ENCODE measurements at regions of chr7 and their contacts with region 1.

Region 1: DNA sequence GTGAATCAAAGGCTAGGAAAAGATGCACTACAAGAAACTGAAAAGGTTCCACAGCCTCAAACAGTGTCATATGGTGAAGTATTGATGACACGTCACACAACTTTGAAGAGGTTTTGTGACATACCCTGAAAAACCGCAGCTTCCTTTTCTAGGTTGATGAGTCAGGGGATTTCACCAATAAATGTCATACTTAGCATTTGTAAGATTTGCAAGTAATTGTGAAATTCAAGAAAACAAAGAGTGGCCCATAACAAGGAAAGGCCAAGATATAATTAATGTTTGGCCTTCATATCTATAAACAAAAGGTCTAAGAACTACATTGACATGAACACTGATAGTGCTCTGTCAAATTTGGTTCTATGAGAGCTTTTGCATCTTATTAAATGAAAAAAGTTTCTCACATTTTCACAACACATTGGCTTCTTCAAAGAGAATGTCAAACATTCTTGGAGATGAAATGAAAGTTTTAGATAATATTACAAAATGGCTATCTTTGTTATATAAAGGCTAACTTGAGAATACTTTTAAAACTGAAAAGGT is 62.0 kb upstream of the NAMPT start:
- DNase-seq: peak; percentile 61
- H3K4me3 Mint-ChIP-seq: peak overlapping the region; percentile 59
- H3K27ac Mint-ChIP-seq: peak overlapping the region; percentile 99
- H3K4me1 Mint-ChIP-seq: peaks cover 60% of the 10 kb centered on the region
- H3K27me3 Mint-ChIP-seq: peaks cover 4% of the 10 kb centered on the region

Region 2: DNA sequence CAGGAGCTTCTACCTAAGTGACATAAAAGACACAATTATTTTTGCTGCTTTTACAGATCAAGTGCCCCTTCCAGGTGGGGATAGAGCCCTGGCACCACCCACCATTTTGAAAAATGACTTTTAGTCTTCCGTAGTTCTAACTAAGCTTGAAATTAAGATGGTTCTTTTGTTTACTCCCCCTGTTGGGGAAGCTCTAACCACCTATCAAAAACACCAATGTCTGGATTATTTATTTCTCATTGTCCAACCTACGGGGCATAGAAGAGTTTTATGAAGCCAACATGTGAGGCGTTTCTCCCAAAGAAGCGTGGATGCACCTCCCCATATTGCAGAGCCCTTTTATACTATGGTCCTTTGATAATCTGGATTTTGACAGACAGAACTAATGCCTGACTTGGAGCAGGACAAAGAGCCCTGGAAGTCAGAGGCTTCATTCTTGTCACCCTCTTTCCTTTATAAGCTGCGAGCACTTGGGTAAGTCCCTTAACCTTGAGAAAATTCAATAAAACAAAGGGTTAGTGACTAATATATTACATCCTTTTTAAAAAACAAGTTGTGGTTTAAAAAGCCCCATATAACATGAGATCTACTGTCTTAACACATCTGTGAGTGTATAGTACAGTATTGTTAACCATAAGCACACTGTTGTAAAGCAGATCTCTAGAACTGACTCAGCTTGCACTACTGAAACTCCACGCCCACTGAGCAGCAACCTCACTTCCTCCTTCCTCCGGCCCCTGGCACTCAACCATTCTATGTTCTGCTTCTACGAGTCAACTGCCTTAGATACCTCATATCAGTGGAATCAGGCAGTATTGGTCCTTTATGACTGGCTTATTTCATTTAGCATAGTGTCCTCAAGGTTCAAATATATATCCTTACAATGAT is 537.8 kb before region 1 on chr7:
- CTCF ChIA-PET with region 1: no interaction called
- POLR2A ChIA-PET with region 1: no interaction called
- intact Hi-C with region 1: loop called (anchors 1 kb)
- DNase-seq: peak; percentile 96
- H3K4me3 Mint-ChIP-seq: peak overlapping the region; percentile 21
- H3K27ac Mint-ChIP-seq: peak overlapping the region; percentile 67
- H3K4me1 Mint-ChIP-seq: peaks cover 57% of the 10 kb centered on the region
- H3K27me3 Mint-ChIP-seq: no peaks in the 10 kb centered on the region

Region 3: GRCh38 chr7:106285051-106285854 is 61.5 kb before region 1 on chr7:
- CTCF ChIA-PET with region 1: interaction called, 7 read pairs
- POLR2A ChIA-PET with region 1: interaction called, 143 read pairs
- intact Hi-C with region 1: loop called (anchors 1 kb)
- DNase-seq: peak; percentile 100
- H3K4me3 Mint-ChIP-seq: peak overlapping the region; percentile 92
- H3K27ac Mint-ChIP-seq: peak overlapping the region; percentile 99
- H3K4me1 Mint-ChIP-seq: peaks cover 50% of the 10 kb centered on the region
- H3K27me3 Mint-ChIP-seq: peaks cover 2% of the 10 kb centered on the region

Region 4: DNA sequence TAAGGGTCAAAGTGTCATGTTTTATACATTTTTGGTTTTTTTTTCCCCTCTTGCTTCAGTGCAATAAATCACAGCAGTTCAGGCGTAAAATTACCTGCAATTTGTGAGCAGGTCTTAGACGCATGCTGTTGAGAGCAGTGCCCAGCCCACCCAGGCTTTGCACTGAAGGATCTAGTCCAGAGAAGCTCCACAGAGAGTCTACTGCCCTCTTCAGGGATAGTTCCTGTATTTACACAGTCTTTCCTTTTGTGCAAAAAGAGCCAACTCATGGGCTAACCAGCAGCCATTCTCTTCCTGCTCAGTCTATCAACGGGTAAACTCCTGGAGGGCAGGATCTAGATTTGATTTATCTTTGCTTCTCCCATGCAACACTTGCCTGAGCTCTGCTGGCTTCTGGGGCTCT is 20.3 kb after region 1 on chr7:
- CTCF ChIA-PET with region 1: interaction called, 3 read pairs
- POLR2A ChIA-PET with region 1: interaction called, 3 read pairs
- intact Hi-C with region 1: loop called (anchors 1 kb)
- DNase-seq: peak; percentile 9
- H3K4me3 Mint-ChIP-seq: no peak overlapping the region
- H3K27ac Mint-ChIP-seq: peak overlapping the region; percentile 64
- H3K4me1 Mint-ChIP-seq: peaks cover 45% of the 10 kb centered on the region
- H3K27me3 Mint-ChIP-seq: peaks cover 18% of the 10 kb centered on the region

Region 5: GRCh38 chr7:106425017-106425719 is 78.4 kb after region 1 on chr7:
- CTCF ChIA-PET with region 1: interaction called, 13 read pairs
- POLR2A ChIA-PET with region 1: interaction called, 31 read pairs
- intact Hi-C with region 1: loop called (anchors 1 kb)
- DNase-seq: peak; percentile 91
- H3K4me3 Mint-ChIP-seq: peak overlapping the region; percentile 65
- H3K27ac Mint-ChIP-seq: peak overlapping the region; percentile 97
- H3K4me1 Mint-ChIP-seq: peaks cover 81% of the 10 kb centered on the region
- H3K27me3 Mint-ChIP-seq: no peaks in the 10 kb centered on the region

Region 6: DNA sequence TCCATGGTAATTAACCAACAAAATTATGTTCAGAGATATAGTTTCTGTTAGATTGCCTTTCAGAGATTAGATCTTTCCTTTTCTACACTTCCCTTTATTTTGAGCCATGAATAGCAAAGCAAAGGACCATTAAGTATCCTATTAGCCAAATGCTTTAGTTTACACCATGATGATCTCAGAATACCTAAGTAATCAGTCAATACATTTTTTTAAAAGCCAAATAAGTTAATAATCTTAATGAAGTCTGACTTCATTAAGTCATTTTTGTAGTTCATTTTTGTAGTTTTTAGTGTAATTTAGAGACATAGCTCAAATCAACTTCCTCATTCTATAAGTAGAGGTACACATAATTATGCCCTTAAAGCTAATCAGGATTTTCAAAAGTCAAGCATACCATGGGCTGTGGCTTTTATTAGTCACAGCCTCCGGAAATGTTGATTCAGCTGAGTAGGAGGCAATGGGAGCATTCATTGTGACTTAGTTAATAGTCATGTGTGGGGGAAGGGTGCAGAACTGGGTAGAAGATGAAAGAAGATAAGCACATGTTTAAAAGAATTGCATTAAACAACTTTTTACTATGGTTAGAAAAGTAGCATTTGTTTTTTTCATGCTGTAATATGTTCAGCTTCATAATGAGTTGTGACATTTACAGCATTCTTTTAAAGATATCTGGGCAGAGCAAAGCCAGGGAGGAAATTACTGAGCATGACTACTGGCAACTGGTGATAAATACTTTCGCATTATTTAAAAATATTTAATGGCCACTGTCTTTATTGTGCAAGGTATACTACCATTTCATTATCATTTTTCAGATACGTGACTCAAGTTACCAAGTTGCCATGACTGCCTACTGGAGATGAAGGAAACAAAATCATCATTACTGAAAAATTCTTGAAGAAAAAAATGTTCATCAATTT is 371.5 kb after region 1 on chr7:
- CTCF ChIA-PET with region 1: no interaction called
- POLR2A ChIA-PET with region 1: no interaction called
- intact Hi-C with region 1: loop called (anchors 2 kb)
- DNase-seq: peak; percentile 90
- H3K4me3 Mint-ChIP-seq: no peak overlapping the region
- H3K27ac Mint-ChIP-seq: no peak overlapping the region
- H3K4me1 Mint-ChIP-seq: peaks cover 12% of the 10 kb centered on the region
- H3K27me3 Mint-ChIP-seq: no peaks in the 10 kb centered on the region

Region 7: GRCh38 chr7:107661081-107661864 is 1314.5 kb after region 1 on chr7:
- CTCF ChIA-PET with region 1: no interaction called
- POLR2A ChIA-PET with region 1: no interaction called
- intact Hi-C with region 1: loop called (anchors 5 kb)
- DNase-seq: peak; percentile 70
- H3K4me3 Mint-ChIP-seq: peak overlapping the region; percentile 84
- H3K27ac Mint-ChIP-seq: peak overlapping the region; percentile 93
- H3K4me1 Mint-ChIP-seq: peaks cover 30% of the 10 kb centered on the region
- H3K27me3 Mint-ChIP-seq: peaks cover 11% of the 10 kb centered on the region